Heart right ventricle (tissue), 16 donors: ENCODE measurements at regions of chr15 and their contacts with region 1.

Region 1: GRCh38 chr15:62403164-62403809 is 238.2 kb upstream of the C2CD4B start:
- DNase-seq: no peak
- ATAC-seq: peak in 7 of 8 donors; percentile 51 to 87 (median 68)
- H3K4me3 ChIP-seq: no peak overlapping the region
- H3K27ac ChIP-seq: peak overlapping the region in 4 of 10 donors; percentile 9 to 67 (median 45)
- H3K4me1 ChIP-seq: peaks cover 3 to 56% (median 32%) of the 10 kb centered on the region in 9 donors
- H3K27me3 ChIP-seq: no peaks in the 10 kb centered on the region
- CTCF ChIP-seq: no peak

Region 2: GRCh38 chr15:62362608-62363007 is 40.7 kb before region 1 on chr15:
- intact Hi-C with region 1: no loop called
- DNase-seq: no peak
- ATAC-seq: peak in 1 of 8 donors; percentile 58
- H3K4me3 ChIP-seq: no peak overlapping the region
- H3K27ac ChIP-seq: no peak overlapping the region
- H3K4me1 ChIP-seq: no peaks in the 10 kb centered on the region
- H3K27me3 ChIP-seq: peaks cover 0 to 21% (median 0%) of the 10 kb centered on the region in 7 donors
- CTCF ChIP-seq: no peak

Region 3: DNA sequence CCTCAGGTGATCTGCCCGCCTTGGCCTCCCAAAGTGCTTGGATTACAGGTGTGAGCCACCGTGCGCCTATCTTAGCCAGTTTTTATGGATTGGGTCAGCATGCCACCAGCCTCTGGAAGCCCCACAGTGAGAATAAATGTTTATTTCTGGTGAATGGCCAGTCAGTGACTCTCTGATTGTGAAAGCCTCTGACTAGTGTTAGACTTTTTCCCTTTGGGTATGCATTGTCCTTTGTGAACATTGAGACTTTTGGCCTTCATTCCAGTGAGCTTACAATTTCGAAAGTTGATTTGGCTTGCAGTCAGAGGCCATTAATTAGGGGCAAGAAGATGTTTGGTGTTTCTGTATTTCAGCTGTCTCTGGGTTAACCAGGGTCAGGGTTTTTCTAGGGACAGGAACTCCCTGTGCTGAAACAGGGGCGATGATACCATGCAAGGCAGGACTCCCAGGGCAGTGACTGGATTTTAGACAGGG is 36.3 kb after region 1 on chr15:
- intact Hi-C with region 1: loop called in 2 of 10 experiments (anchors 5 kb)
- DNase-seq: no peak
- ATAC-seq: peak in 2 of 8 donors; percentile 59 to 61
- H3K4me3 ChIP-seq: no peak overlapping the region
- H3K27ac ChIP-seq: peak overlapping the region in 1 of 10 donors; percentile 18
- H3K4me1 ChIP-seq: peaks cover 0 to 41% (median 25%) of the 10 kb centered on the region in 9 donors
- H3K27me3 ChIP-seq: no peaks in the 10 kb centered on the region
- CTCF ChIP-seq: no peak

Region 4: DNA sequence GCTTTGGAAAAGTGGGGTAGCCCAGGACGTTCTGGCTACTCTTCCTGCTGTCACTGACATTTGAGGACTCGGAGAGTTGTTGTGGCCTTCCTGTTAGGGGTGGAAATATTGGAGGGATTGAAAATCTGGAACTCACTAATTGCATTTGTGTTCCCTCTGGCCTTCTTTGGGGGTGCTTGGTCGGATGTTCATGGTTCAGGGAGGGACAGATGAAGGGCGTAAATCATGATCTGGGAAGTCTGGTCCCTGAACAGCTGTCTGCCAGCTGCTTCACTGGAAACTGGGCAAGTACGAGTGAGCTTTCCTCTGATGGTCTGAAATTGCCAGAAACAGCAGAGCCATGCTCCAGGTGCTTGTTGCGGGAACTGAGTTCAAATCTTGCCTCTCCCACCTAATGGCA is 89.6 kb after region 1 on chr15:
- intact Hi-C with region 1: no loop called
- DNase-seq: peak in 1 of 2 donors; percentile 40
- ATAC-seq: peak in 7 of 8 donors; percentile 29 to 50 (median 41)
- H3K4me3 ChIP-seq: no peak overlapping the region
- H3K27ac ChIP-seq: peak overlapping the region in 5 of 10 donors; percentile 4 to 38 (median 24)
- H3K4me1 ChIP-seq: peaks cover 8 to 52% (median 38%) of the 10 kb centered on the region in 9 donors
- H3K27me3 ChIP-seq: no peaks in the 10 kb centered on the region
- CTCF ChIP-seq: no peak